ENCODE measurements at regions of chr2 and their contacts with region 1.

Region 1: DNA sequence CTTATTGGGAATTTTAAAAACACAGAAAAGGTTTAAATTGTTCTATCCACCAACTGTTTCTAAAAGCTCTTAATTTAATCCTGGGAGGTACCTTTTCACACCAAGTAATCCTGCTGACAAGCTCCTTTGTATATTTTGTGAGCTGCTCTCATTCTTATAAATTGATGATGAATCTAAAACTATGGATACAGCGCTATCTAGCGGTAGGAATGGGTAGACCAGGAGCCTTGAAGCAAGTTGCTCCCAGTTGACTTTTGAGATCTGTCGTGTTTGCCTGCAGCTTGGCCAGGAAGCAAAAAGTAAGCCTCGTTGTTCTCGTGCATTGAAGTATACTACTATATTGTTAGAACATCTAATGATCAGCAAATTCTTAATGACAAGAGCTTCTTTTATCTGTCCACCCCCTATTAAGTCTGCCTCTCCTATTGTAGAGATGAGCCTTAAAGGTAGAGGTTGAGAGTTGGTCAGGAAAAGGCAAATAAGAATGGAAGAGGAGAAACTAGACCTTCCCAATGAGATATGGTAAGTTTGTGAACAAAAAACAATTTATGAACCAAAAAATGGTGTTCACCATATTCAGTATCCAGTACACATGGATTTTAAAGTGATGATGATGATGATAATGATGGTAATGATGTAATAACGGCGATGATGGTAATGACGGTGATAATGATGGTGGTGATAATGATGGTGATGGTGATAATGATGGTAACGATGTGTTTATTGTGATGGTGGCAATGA is 212.0 kb upstream of the NCKAP5 start:
- DNase-seq: no peak
- H3K4me3 Mint-ChIP-seq: no peak overlapping the region
- H3K27ac Mint-ChIP-seq: no peak overlapping the region
- H3K4me1 Mint-ChIP-seq: no peaks in the 10 kb centered on the region
- H3K27me3 Mint-ChIP-seq: no peaks in the 10 kb centered on the region

Region 2: GRCh38 chr2:132547074-132547687 is 1233.1 kb before region 1 on chr2:
- intact Hi-C with region 1: loop called (anchors 2 kb)
- DNase-seq: peak; percentile 9
- H3K4me3 Mint-ChIP-seq: no peak overlapping the region
- H3K27ac Mint-ChIP-seq: no peak overlapping the region
- H3K4me1 Mint-ChIP-seq: no peaks in the 10 kb centered on the region
- H3K27me3 Mint-ChIP-seq: no peaks in the 10 kb centered on the region

Region 3: DNA sequence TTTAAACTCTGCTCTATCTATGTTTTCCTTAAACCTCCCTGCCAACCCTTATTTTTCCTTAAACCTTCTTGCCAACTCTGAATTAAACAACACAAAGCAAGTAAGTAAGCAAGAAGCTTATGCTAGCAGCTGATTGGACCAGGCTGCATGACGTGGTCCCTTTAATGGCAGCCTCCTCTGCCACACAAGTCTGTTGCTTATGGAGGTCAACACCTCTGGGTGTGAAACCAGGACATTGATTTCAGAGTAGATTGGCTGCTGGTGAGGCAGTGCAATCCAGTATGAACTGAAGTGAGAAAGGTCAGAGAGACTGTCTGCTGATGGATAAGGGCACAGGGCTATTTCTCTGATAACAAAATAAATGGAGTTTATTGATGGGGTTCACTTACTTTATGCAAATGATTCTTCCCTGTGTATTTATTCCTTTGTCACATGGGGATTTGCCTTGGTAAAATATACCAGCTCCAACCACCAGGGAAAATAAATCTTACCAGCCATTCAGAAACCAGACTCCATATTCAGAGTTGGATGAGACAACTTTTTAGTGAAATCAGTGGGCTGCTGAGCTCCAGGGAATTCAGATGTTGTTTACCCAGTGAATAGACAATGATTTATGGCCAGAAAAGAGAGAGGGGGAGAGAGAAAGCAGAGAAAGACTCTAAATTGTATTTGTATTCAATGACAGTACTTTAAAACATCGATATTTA is 99.8 kb before region 1 on chr2:
- intact Hi-C with region 1: no loop called
- DNase-seq: no peak
- H3K4me3 Mint-ChIP-seq: no peak overlapping the region
- H3K27ac Mint-ChIP-seq: no peak overlapping the region
- H3K4me1 Mint-ChIP-seq: no peaks in the 10 kb centered on the region
- H3K27me3 Mint-ChIP-seq: no peaks in the 10 kb centered on the region

Region 4: GRCh38 chr2:134056173-134056572 is 275.9 kb after region 1 on chr2:
- intact Hi-C with region 1: no loop called
- DNase-seq: no peak
- H3K4me3 Mint-ChIP-seq: no peak overlapping the region
- H3K27ac Mint-ChIP-seq: no peak overlapping the region
- H3K4me1 Mint-ChIP-seq: no peaks in the 10 kb centered on the region
- H3K27me3 Mint-ChIP-seq: peaks cover 2% of the 10 kb centered on the region

Measured in activated T-helper 1 cell treated with anti-CD3 and anti-CD28 coated beads, Interleukin-12 subunit alpha, Interleukin-12 subunit beta, Interleukin-2, Interleukin-4 antibody, amounts not matched to agents 30 ng/mL and 10 ng/mL and 1 ng/mL, durations not matched to agents 14 hours and 24 hours and 36 hours (primary cell).